ENCODE measurements at regions of chr3 and their contacts with region 1.

Region 1: DNA sequence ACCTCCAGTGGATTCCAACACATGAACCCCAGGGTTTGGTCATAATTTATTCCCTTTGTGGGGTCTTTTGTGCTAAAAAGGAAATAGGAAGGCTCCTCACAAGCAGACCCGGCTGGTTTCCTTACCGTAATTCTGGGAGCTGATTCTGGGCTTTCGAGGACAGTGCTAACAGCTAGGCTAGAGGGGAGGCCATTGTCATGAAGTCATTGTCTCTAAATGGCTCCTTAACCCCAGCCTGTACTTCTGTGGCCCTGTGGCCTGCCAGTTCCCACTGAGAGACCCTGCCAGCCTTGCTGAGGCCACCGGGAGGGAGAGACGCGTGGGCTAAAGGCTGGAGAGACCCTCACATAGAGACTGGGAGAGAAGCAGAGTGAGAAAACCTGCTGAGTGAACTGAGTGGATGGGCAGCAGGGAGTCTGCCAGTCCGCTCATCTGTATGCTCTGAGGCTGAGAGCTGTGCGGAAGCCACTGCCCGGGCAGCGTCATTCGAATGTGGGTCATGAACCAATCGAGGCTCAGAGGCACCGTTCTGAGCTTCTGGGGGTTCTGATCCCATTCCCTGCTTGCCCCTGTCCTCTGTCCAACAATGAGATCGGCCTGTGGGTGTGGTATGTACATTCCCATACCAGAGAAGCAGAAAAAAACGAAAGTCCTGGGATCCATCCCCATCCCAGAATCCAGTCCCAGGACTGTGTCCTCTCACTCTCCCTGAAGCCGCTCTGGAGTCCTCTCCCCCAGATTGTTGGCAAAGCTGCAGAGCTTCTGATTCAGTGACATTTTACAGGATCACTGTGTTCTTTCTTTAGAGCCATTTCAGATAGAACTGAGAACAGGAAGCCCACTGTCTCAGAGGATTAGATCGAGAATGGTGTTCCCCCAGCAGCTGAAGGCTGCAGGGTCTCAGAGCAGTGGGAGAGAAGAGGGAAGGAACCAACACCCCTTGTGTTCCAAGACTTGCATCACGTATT is 21.3 kb upstream of the DGKG start:
- DNase-seq: no peak
- ATAC-seq: peak; percentile 90 to 93

Region 2: DNA sequence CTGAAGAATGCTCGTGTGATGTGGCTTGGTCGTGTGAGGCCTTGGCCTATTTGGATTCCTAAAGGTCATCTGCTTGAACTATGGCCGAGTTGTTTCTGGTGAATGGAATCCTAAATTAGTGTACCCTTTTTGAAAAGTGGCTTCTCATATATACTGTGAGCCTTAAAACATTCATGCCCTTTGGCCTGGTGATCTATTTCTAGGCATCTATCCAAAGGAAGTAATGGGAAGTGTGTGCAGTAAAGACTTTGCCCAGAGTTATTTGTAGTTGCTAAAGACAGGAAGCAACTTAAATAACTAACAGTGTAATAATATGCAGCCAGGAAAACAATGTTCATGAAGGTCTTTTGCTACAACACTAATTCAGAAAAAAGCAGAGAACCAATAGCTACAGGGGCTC is 24.2 kb before region 1 on chr3:
- intact Hi-C with region 1: no loop called
- DNase-seq: no peak
- ATAC-seq: no peak

Region 3: DNA sequence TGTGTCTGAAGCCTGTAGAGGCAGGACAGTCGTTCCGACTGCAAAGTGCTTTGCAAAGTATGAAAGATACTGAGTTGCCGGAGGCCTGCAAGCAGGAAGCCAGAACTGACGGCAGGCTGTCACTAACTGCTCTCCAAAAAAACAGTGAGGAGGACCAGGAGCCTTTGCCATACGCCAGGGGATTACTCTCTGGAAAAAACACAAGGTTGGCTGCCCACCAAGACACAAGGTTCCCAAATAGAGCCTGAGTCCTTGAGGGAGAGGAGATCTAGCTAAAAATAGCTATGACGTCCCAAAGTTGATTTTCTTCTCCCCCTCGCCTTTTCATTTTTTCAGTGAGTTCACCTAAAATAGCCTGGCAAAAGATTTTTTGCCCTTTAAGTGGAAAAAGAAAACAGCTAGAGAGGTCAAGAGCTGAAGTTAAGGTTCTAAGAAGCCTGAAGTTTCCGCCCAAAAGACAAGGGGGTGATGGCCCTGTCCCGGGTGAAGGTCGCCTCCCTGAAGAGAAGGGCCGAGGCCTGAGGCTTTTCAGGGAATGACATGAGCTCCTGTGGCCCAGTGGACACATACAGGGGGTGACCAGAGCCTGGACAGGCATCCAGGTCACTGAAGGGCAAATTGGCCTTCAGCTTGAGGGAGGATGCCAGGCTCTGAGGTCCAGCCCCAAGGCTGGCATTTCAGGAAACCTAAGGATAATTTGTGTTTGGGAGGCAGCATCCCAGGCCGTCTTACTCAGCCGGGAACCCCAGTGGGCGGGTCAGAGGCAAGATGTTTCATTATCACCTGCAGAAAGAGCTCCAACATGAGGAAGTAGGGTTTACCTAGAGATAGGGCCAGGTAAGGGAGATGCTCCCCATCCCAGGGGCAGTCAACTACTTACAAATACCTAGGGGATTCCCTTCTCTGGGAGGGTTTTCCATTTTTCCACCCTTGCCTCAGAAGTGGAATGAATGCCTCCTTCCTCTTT is 23.6 kb after region 1 on chr3:
- intact Hi-C with region 1: loop called in 1 of 2 experiments (anchors 2 kb)
- DNase-seq: peak; percentile 68
- ATAC-seq: peak; percentile 93 to 96

Region 4: DNA sequence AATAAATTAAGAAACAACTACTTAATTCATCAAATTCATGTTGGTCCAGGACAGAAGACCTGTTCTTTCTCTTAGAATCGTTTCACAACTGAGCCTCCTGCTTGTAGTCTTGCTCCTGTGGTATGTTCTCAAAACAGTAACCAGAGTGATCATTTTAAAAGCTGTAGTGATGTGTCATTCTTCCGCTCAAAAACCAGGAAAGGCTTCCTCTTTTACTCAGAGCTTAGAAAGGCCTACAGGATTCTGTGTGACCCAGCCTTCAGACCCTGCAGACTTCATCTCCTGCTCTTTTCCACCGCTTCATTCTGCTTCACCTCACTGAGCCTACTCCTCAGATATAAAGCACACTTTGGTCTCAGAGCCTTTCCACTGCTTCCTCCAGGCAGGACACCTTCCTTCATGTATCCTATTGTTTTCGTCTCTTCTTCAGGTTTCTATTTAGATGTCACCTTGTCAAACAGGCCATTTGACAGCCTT is 569.7 kb after region 1 on chr3:
- intact Hi-C with region 1: no loop called
- DNase-seq: no peak
- ATAC-seq: peak in 1 of 2 donors; percentile 9

Measured in left cardiac atrium (tissue), 4 donors.